Ovary (tissue), 10 donors: ENCODE measurements at regions of chr13 and their contacts with region 1.

Region 1: DNA sequence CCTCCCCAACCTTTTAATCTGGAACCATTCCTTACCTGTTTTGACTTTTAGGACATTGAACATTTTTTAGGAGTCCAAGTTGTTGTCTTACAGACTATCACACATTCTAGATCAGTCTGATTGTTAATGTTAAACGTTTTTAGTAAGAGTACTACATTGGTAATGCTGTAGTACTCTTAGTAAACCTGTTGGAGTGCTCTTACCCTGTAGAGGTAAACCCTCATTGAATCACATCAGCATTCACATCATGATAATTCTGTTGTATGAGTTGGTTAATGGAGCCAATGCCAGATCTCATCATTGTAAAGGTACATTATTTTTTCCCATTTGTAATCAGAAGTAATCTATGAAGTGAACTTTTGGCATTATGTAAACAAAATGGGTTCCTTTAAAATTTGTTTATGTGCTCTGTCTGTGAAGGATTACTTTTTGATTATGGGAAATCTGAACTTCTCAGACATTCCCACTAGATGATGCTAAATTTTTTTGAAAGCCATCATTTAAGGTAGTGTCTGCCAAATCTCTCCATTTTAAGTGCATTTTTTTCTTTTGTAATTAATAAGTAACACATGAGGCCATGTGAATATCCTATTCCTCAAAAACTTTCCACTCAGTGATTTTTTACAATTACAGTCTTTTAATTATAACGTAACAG is 55.2 kb downstream of the VWA8 start:
- DNase-seq: no peak
- H3K4me3 ChIP-seq: no peak overlapping the region
- H3K27ac ChIP-seq: no peak overlapping the region
- H3K4me1 ChIP-seq: no peaks in the 10 kb centered on the region
- H3K27me3 ChIP-seq: no peaks in the 10 kb centered on the region
- CTCF ChIP-seq: no peak
- EP300 ChIP-seq: no peak
- POLR2A ChIP-seq: no peak

Region 2: GRCh38 chr13:41931337-41931736 is 25.6 kb after region 1 on chr13:
- intact Hi-C with region 1: no loop called
- DNase-seq: no peak
- H3K4me3 ChIP-seq: no peak overlapping the region
- H3K27ac ChIP-seq: no peak overlapping the region
- H3K4me1 ChIP-seq: no peaks in the 10 kb centered on the region
- H3K27me3 ChIP-seq: no peaks in the 10 kb centered on the region
- CTCF ChIP-seq: no peak
- EP300 ChIP-seq: no peak
- POLR2A ChIP-seq: no peak

Region 3: GRCh38 chr13:42102961-42103865 is 197.5 kb after region 1 on chr13:
- intact Hi-C with region 1: loop called in 1 of 4 experiments (anchors 10 kb)
- DNase-seq: no peak
- H3K4me3 ChIP-seq: no peak overlapping the region
- H3K27ac ChIP-seq: no peak overlapping the region
- H3K4me1 ChIP-seq: peaks cover 2% of the 10 kb centered on the region
- H3K27me3 ChIP-seq: no peaks in the 10 kb centered on the region
- CTCF ChIP-seq: no peak
- EP300 ChIP-seq: no peak
- POLR2A ChIP-seq: no peak